ENCODE measurements at regions of chr3 and their contacts with region 1.

Region 1: DNA sequence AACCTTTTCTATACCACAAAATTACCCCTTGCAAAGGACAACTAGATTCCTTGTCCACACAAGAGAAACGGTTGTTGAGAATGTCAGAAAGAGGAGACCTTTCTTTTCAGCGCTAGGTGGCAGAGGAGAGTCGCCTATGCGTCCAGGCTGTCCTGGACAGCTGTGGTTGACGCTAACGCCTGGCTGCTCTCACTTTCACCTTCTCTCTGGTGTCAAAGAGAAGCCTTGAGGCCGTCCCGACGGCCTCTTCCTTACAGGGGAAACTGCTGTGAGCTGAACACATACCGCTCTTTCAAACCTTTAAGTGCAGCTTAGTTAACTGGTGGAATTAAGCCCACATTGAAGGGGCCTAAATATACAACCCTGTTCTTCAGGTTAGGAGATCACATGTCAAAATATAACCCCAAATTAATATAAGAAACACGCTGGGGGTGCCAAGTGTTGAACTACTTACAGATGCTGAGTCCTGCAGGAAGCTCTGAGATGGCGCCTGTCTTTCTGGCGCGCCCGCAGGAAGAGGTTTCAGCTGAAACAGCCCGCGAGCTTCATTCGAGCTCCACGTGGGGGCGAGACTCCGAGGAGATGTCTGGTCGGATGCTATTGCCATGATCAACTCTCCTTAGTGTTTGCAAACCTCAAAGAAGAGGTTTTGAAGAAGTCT is 26.1 kb upstream of the KBTBD8 start:
- DNase-seq: peak; percentile 78
- ATAC-seq: peak; percentile 95
- H3K4me3 Mint-ChIP-seq: peak overlapping the region; percentile 75
- H3K27ac Mint-ChIP-seq: peak overlapping the region; percentile 81
- H3K4me1 Mint-ChIP-seq: peaks cover 16% of the 10 kb centered on the region
- H3K27me3 Mint-ChIP-seq: peaks cover 8% of the 10 kb centered on the region

Region 2: GRCh38 chr3:66938338-66938963 is 33.6 kb before region 1 on chr3:
- CTCF ChIA-PET with region 1: interaction called, 21 read pairs
- POLR2A ChIA-PET with region 1: no interaction called
- DNase-seq: peak; percentile 46
- ATAC-seq: peak; percentile 61
- H3K4me3 Mint-ChIP-seq: no peak overlapping the region
- H3K27ac Mint-ChIP-seq: no peak overlapping the region
- H3K4me1 Mint-ChIP-seq: no peaks in the 10 kb centered on the region
- H3K27me3 Mint-ChIP-seq: peaks cover 17% of the 10 kb centered on the region

Region 3: DNA sequence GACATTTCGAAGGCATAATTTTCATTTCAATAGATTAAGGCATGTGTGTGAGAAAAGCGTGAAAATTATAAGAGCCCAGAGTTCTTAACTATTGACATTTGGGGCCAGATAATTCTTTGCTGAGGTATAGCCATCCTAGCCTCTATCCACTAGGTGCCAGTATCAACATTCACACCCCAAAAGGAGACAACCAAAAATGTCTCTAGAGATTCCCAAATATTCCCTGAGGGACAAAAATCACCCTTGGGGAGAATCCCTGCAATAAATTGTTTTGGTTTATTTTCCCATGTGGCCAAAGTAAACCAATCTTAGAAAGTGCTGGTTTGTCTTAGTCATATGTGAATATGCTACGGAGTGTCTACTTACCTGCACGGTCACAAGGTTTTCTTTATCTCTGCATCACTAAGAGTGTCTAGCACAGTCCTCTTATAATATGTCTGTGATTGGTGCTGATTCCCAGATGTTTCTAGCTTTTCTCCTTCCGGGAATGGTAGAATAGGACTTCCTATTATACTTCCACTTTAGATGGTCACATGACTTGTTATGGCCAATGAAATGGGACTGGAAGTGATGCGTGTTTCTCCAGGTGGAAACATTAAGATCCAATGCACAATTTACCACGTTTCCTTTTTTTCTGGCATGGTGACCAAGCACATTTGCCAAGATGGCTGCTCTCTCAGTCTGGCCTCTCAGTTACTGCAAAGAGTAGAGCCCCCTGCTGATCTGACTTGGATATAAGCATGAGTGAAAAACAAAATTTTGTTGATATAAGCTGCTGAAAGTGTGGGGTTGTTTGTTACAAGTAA is 18.0 kb after region 1 on chr3:
- CTCF ChIA-PET with region 1: interaction called, 55 read pairs
- POLR2A ChIA-PET with region 1: interaction called, 4 read pairs
- DNase-seq: no peak
- ATAC-seq: no peak
- H3K4me3 Mint-ChIP-seq: no peak overlapping the region
- H3K27ac Mint-ChIP-seq: no peak overlapping the region
- H3K4me1 Mint-ChIP-seq: no peaks in the 10 kb centered on the region
- H3K27me3 Mint-ChIP-seq: peaks cover 14% of the 10 kb centered on the region

Region 4: GRCh38 chr3:67006460-67006859 is 34.4 kb after region 1 on chr3:
- CTCF ChIA-PET with region 1: interaction called, 24 read pairs
- POLR2A ChIA-PET with region 1: interaction called, 3 read pairs
- DNase-seq: no peak
- ATAC-seq: no peak
- H3K4me3 Mint-ChIP-seq: no peak overlapping the region
- H3K27ac Mint-ChIP-seq: no peak overlapping the region
- H3K4me1 Mint-ChIP-seq: peaks cover 7% of the 10 kb centered on the region
- H3K27me3 Mint-ChIP-seq: no peaks in the 10 kb centered on the region

Region 5: DNA sequence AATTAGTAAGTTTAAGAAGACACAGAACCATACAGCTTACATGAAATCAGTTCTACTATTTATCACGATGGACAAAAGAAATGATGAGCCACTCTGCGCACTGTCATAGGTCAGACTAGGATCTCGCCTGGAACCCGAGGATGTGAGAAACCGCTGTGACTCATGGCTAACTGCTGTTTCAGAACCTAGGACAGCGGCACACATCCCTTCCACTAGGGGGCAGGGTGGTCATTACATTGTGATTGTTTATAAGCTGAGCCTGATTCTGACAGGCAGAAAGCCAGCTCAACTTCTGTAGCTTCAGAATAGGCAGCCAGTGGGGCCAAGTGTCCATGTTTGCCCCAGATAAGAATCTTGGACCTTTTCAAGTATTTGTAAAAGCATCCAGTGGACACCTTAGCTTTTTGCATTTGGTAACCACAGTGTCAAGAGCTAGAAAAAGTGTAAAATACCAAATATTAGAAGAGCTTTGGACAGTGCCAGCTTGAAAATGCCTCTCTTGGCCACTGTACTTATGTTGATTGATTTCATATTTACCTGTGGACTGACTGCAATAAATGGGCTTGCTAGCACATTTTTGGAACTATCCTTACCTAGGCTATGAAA is 141.9 kb after region 1 on chr3:
- CTCF ChIA-PET with region 1: interaction called, 36 read pairs
- POLR2A ChIA-PET with region 1: no interaction called
- DNase-seq: peak; percentile 87
- ATAC-seq: peak; percentile 93
- H3K4me3 Mint-ChIP-seq: no peak overlapping the region
- H3K27ac Mint-ChIP-seq: no peak overlapping the region
- H3K4me1 Mint-ChIP-seq: peaks cover 6% of the 10 kb centered on the region
- H3K27me3 Mint-ChIP-seq: peaks cover 9% of the 10 kb centered on the region

Region 6: GRCh38 chr3:67215690-67216089 is 243.7 kb after region 1 on chr3:
- CTCF ChIA-PET with region 1: no interaction called
- POLR2A ChIA-PET with region 1: no interaction called
- DNase-seq: no peak
- ATAC-seq: no peak
- H3K4me3 Mint-ChIP-seq: no peak overlapping the region
- H3K27ac Mint-ChIP-seq: no peak overlapping the region
- H3K4me1 Mint-ChIP-seq: no peaks in the 10 kb centered on the region
- H3K27me3 Mint-ChIP-seq: no peaks in the 10 kb centered on the region